WTC11 (cell line): ENCODE measurements at regions of chr21 and their contacts with region 1.

Region 1: DNA sequence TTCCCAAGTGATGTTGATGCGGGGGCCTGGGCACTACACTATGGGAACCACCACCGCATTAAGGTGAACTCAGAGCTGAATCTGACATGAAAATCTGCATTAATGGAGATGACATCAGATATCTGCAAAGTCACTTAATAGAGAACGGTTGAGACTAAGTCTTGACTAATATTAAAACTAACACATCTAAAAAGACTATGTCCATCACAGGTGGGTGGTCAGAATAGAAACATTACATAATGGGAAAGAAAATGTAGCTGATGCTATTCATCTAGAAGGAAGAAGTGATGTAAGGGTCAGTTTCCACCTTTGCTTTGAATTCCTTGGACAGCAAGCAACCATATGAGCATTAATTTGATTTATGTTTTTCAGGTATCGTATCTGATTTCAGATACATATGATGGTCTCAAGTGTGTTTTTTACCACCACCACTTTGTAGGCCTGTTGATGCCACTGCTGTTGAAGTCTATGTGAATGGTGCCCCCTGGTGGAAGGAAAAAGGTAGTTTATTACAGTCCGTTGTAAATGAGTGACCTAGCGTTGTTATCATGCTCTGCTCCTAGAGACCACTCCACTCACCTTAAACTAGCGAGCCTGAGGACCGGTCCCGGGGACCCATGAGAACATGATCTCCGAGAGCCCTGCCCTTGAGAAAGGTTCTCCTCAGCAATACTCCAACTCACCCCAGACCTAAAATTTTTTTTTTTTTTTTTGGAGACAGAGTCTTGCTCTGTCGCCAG is 73.5 kb downstream of the BACH1 start:
- DNase-seq: peak; percentile 24
- ATAC-seq: peak; percentile 84
- H3K4me3 Mint-ChIP-seq: no peak overlapping the region
- H3K27ac Mint-ChIP-seq: no peak overlapping the region
- H3K4me1 Mint-ChIP-seq: peaks cover 10% of the 10 kb centered on the region
- H3K27me3 Mint-ChIP-seq: no peaks in the 10 kb centered on the region
- CTCF ChIP-seq: peak; percentile 54; the same call in 1 of the 2 replicates

Region 2: GRCh38 chr21:29091032-29091431 is 281.2 kb before region 1 on chr21:
- CTCF ChIA-PET with region 1: interaction called, 22 read pairs
- POLR2A ChIA-PET with region 1: no interaction called
- DNase-seq: no peak
- ATAC-seq: no peak
- H3K4me3 Mint-ChIP-seq: no peak overlapping the region
- H3K27ac Mint-ChIP-seq: no peak overlapping the region
- H3K4me1 Mint-ChIP-seq: peaks cover 6% of the 10 kb centered on the region
- H3K27me3 Mint-ChIP-seq: peaks cover 12% of the 10 kb centered on the region
- CTCF ChIP-seq: no peak

Region 3: DNA sequence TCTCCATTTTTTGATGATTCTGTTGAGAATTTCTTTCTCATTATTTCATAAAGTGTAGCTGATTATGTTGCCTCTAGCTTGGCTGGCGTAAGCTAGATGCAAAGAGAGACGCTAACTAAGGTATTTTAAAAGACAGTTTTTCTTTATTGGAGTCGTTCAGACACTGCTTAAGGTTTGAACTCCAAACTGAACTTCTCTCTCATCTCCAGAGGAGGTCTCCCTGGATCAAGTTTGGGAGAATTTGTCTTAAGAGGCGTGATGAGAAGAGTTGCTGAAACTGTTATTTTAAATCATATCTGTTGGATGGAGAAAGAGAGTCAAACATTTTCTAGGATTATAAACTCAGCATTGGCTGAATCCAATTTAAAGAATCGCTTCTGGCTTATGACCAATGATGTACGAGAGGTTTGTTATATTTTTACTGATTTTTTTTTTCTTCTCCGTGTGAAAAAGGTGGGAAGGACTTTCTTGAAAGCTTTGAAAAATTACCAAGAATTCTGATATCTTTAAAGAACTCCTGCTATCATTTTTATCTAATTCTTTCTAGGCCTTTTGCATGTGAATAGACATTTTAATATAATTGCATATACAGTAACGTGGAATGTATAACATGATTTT is 207.8 kb before region 1 on chr21:
- CTCF ChIA-PET with region 1: interaction called, 17 read pairs
- POLR2A ChIA-PET with region 1: no interaction called
- DNase-seq: no peak
- ATAC-seq: peak; percentile 65; the same call in 1 of the 2 replicates
- H3K4me3 Mint-ChIP-seq: no peak overlapping the region
- H3K27ac Mint-ChIP-seq: no peak overlapping the region
- H3K4me1 Mint-ChIP-seq: no peaks in the 10 kb centered on the region
- H3K27me3 Mint-ChIP-seq: no peaks in the 10 kb centered on the region
- CTCF ChIP-seq: no peak

Region 4: DNA sequence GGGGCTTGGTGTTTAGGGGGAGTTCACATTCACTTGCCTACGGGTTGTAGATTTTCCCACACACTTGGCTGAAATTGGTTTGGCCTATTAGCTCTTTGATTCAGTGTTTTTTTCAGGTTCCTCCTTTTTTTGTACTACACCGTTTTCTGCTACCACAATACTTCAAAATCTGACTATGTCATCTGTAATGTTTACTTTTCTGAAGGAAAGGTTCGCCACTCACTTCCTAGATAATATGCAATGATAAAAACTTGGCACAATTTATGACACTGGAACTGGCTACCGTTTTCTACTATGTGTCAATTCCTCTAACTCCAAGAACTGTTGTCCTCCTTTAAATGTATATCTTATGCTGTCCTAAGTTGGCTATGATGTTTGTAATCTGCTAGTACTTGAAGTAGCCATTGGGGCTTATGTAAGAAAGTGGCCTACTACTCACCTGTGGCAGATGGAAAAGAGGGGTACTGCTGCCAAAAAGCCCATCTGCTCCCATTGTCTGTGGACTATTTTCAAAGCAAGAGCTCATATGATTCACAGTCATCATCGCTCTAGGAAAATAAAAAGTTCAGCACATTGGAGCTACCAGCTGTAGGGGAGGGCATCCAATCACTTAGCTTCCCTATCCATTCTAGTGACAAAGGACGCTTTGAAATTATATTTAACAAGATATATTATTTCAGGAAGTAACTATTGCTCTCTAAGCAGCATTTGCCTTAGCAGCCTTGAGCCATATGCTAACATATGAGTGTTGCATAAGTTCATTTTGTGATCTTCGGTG is 115.9 kb before region 1 on chr21:
- CTCF ChIA-PET with region 1: no interaction called
- POLR2A ChIA-PET with region 1: no interaction called
- DNase-seq: no peak
- ATAC-seq: no peak
- H3K4me3 Mint-ChIP-seq: no peak overlapping the region
- H3K27ac Mint-ChIP-seq: no peak overlapping the region
- H3K4me1 Mint-ChIP-seq: no peaks in the 10 kb centered on the region
- H3K27me3 Mint-ChIP-seq: no peaks in the 10 kb centered on the region
- CTCF ChIP-seq: no peak

Region 5: GRCh38 chr21:29343519-29343918 is 28.7 kb before region 1 on chr21:
- CTCF ChIA-PET with region 1: interaction called, 15 read pairs
- POLR2A ChIA-PET with region 1: interaction called, 3 read pairs
- DNase-seq: no peak
- ATAC-seq: no peak
- H3K4me3 Mint-ChIP-seq: no peak overlapping the region
- H3K27ac Mint-ChIP-seq: no peak overlapping the region
- H3K4me1 Mint-ChIP-seq: peaks cover 4% of the 10 kb centered on the region
- H3K27me3 Mint-ChIP-seq: no peaks in the 10 kb centered on the region
- CTCF ChIP-seq: no peak

Region 6: GRCh38 chr21:29360799-29361765 is 11.2 kb before region 1 on chr21:
- CTCF ChIA-PET with region 1: interaction called, 19 read pairs
- POLR2A ChIA-PET with region 1: interaction called, 3 read pairs
- DNase-seq: no peak
- ATAC-seq: peak; percentile 44; the same call in 1 of the 2 replicates
- H3K4me3 Mint-ChIP-seq: no peak overlapping the region
- H3K27ac Mint-ChIP-seq: no peak overlapping the region; the same call in 1 of the 2 replicates
- H3K4me1 Mint-ChIP-seq: no peaks in the 10 kb centered on the region; the same call in 1 of the 2 replicates
- H3K27me3 Mint-ChIP-seq: no peaks in the 10 kb centered on the region
- CTCF ChIP-seq: no peak

Region 7: DNA sequence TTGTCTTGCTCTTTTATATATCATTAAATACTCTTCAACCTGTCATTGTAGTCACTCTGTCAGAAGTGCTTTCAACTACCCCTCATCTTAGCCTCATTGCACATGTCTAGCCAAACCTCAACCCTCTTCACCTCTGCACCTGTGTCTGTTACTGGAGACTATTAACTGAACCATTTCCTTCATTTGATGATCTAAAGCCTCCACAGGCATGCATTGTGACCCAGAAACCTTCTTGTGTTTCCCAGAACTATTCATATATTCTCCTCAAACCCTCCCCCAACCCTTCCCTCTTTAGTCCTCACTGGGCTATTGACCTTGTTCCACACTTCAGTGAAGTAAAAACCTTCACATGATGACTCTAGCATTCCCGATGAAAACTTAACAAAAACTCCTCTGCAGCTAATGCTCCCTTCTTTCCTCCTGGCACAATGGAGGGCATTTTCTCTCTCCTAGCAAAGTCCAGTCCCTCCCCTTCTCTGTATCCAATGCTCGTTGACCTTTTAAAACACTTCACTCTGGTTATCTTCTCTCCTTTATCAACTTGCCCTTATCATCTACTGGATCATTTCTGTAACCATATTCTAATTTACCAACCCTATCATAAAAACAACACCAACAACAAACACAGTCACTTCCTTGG is 12.6 kb after region 1 on chr21:
- CTCF ChIA-PET with region 1: interaction called, 11 read pairs
- POLR2A ChIA-PET with region 1: no interaction called
- DNase-seq: no peak
- ATAC-seq: no peak
- H3K4me3 Mint-ChIP-seq: no peak overlapping the region
- H3K27ac Mint-ChIP-seq: no peak overlapping the region
- H3K4me1 Mint-ChIP-seq: no peaks in the 10 kb centered on the region
- H3K27me3 Mint-ChIP-seq: no peaks in the 10 kb centered on the region
- CTCF ChIP-seq: no peak

Region 8: GRCh38 chr21:29499734-29500343 is 127.6 kb after region 1 on chr21:
- CTCF ChIA-PET with region 1: interaction called, 14 read pairs
- POLR2A ChIA-PET with region 1: no interaction called
- DNase-seq: peak; percentile 74
- ATAC-seq: peak; percentile 97
- H3K4me3 Mint-ChIP-seq: no peak overlapping the region
- H3K27ac Mint-ChIP-seq: no peak overlapping the region
- H3K4me1 Mint-ChIP-seq: no peaks in the 10 kb centered on the region
- H3K27me3 Mint-ChIP-seq: no peaks in the 10 kb centered on the region
- CTCF ChIP-seq: peak; percentile 83

Region 9: GRCh38 chr21:29581393-29581792 is 209.2 kb after region 1 on chr21:
- CTCF ChIA-PET with region 1: no interaction called
- POLR2A ChIA-PET with region 1: no interaction called
- DNase-seq: no peak
- ATAC-seq: no peak
- H3K4me3 Mint-ChIP-seq: no peak overlapping the region
- H3K27ac Mint-ChIP-seq: no peak overlapping the region
- H3K4me1 Mint-ChIP-seq: no peaks in the 10 kb centered on the region
- H3K27me3 Mint-ChIP-seq: no peaks in the 10 kb centered on the region
- CTCF ChIP-seq: no peak